Posterior vena cava (tissue), 2 donors: ENCODE measurements at regions of chr7 and their contacts with region 1.

Region 1: DNA sequence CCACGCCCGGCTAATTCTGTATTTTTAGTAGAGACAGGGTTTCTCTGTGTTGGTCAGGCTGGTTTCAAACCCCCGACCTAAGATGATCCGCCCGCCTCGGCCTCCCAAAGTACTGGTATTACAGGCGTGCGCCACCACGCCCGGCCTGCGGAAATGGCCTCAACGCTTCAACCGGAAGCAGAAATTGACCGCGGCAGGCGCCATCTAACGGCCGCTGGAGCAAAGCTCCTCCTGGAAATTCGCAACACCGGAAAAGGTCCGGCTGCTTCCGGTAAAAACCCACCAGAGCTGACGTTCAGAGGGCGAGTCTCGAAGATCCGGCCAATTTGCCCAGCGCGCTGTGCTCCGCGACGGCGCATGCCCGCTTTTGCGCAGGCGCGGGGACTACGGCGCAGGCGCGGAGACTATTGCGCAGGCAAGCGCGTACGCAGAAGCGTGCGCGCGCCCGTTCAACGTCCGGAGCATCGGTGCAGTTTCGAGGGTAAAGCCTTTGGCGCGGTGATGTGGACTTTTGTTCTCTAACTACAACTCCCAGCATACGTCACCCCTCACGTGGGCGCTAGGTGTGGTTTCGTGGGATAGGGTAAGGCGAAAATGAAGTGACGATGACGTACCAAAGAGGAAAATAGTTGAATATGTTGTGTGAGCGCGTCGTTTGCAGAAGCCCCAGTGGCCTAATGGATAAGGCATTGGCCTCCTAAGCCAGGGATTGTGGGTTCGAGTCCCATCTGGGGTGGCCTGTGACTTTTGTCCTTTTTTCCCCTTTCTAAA is 915 bp upstream of the FMC1 start:
- DNase-seq: peak; percentile 99

Region 2: DNA sequence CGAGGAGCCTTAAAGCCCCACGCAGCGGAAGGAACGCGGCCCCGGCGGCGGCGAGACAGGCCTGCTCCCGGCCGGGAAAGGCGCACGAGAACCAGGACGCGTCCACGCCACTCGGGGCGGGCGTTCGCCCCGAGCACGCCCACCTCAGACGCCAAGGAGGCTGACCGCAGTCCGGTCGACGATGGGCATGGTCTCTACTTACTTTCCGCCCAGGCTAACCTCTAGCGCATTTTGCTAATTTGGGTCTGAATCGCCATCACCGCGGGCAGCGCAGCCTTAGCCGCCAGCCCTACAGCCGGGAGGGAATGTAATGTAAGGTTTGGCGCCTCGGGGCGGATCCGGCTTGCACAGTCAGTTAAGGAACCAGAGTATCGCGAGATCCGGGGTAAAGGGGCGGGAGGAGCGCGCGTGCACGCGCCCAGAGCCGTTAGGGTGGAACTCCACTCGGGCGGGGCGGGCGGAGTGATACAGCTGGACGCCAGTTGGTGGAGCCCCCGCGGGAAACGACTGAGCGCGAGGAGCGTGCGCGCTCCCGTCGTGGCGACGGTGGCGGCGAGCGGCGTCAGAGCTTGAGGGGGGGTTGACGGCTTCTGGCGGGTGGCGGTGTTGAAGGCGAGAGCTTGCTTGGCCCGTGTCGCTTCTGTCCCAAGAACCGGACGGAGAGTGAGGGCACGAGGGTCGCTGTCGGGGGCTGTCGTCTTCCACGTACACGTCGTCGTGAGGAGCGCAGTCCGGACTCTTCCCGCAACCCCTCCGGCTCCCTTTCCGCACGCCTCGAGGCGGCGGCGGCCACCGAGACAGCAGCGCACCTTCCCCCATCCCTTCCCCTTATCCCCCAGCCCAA is 19.4 kb after region 1 on chr7 and contains the start of gene LUC7L2:
- intact Hi-C with region 1: loop called in 1 of 2 experiments (anchors 2 kb)
- DNase-seq: peak; percentile 100
- total RNA-seq, gene LUC7L2: 74.9 to 77.5 TPM